ENCODE measurements at regions of chr2 and their contacts with region 1.

Region 1: DNA sequence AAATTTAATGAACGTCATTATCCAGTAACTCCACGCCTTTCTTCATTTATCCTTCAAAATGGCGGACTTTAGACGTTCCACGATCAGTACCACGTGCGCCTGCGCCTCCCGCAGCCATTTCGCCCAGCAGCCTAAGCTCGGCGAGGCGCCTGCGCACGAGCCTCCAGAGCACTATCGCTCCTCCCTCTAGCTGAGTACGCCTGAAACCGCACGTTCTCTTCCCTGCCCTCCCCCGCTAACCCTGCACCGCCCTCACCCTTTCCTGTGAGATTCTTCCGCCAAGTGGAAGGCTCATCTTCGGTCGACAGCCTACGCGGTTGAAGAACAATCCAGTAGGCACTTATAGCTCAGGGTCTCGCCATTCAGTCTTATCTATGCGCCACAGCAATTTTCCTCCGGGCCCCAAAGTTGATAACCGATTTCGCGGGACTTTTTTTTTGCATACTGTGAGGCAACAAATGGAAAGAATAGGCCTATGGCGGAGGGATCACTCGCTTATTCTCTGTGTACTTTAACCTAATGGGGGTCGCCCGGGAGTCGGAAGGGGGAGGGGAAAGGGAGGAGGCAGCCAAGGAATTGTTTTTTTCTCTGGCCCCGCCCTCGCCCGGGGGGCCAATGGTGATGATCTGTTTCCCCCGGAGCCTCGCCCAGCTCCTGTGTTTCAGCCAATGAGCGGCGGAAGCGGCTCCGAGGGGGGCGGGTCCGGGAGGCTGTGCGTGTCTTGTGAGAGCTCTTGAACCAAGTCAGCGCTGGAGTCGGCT is at the start of gene KDM3A:
- DNase-seq: peak; percentile 99 to 100 (median 100)
- ATAC-seq: peak; percentile 94 to 96 (median 95)
- H3K4me3 ChIP-seq: peak within 1 kb of the TSS; percentile 67 to 97 (median 76)
- H3K27ac ChIP-seq: peak within 1 kb of the TSS; percentile 91 to 99 (median 96)
- H3K4me1 ChIP-seq: peaks cover 0 to 35% (median 31%) of the 10 kb centered on the region in 12 donors
- H3K27me3 ChIP-seq: no peaks in the 10 kb centered on the region
- CTCF ChIP-seq: peak in 2 of 12 donors; percentile 15 to 25
- POLR2A ChIP-seq: peak in 1 of 2 donors; percentile 99
- total RNA-seq, gene KDM3A: 17.7 to 44.0 (median 35.4) TPM

Region 2: DNA sequence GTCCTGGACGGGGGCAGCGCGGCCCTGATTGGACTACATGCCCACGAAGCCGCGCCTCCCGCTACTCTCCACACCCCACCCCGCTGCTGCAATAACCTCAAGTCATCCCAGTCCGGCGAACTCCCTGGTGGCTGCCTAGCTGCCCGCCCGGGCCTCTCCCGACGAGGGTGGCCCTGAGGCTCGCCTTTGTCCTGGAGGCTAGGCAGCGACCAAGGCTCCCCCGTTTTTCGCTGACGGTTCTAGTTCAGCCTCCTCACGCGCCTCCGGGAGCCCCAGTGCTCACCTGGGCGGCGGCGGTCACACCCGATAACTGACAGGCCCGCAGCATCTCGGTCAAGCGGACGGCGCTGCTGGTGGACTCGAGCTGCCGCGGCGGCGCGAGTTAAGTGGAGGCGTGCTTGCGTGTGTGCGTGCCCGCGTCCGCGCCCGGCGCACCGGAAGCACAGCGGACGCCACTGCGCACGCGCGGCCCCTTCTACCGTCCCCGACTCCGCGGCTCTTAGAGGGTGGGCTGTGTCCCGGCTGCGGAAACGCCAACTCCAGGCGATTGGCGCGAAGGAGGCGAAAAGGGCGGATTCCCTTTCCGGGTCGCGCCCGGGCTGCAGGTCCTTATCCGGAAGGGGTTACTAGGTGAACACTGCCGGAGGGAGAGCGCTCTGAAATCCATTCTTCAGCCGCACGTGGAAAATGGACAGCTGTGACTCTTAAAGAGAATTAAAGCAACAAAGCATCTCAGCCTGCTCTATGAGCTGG is 245.6 kb before region 1 on chr2 and contains the start of gene IMMT:
- intact Hi-C with region 1: loop called in 4 of 10 experiments (anchors 5 to 10 kb)
- DNase-seq: peak; percentile 97 to 99 (median 98)
- ATAC-seq: peak; percentile 92 to 96 (median 94)
- H3K4me3 ChIP-seq: peak within 1 kb of the TSS; percentile 65 to 98 (median 85)
- H3K27ac ChIP-seq: peak within 1 kb of the TSS; percentile 94 to 100 (median 98)
- H3K4me1 ChIP-seq: peaks cover under 1 to 66% (median 49%) of the 10 kb centered on the region in 12 donors
- H3K27me3 ChIP-seq: no peaks in the 10 kb centered on the region
- CTCF ChIP-seq: no peak
- POLR2A ChIP-seq: peak in 1 of 2 donors; percentile 72
- total RNA-seq, gene IMMT: 180 to 315 (median 231) TPM

Region 3: DNA sequence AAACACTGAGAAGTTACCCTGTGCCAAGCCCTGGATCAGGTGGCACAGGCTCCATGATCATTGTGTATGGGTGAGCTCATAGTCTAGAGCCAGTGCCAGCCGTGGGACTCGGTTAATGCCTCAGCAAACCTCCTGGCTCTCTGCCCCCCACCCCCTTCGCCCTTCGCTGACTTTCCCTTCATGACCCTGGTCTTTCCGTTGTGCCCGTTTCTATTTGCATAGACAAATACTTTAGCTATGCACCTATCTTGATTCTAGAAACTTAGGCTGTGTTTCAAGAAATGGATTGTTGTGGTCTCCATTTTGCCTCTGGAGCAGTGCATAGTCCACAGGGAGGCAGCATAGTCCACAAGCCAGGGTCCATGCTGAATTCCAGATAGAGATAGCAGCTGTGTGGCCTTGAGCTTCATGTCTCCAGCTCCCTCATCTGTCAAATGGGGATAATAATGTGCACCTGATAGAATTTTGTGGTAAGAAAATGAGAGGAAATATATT is 44.5 kb before region 1 on chr2:
- intact Hi-C with region 1: loop called in 3 of 10 experiments (anchors 2 to 5 kb)
- DNase-seq: peak in 4 of 5 donors; percentile 27 to 66 (median 36)
- ATAC-seq: peak in 3 of 4 donors; percentile 49 to 59 (median 56)
- H3K4me3 ChIP-seq: no peak overlapping the region
- H3K27ac ChIP-seq: peak overlapping the region in 3 of 12 donors; percentile 4 to 84 (median 83)
- H3K4me1 ChIP-seq: peaks cover 0 to 32% (median 8%) of the 10 kb centered on the region in 12 donors
- H3K27me3 ChIP-seq: no peaks in the 10 kb centered on the region
- CTCF ChIP-seq: peak in 10 of 12 donors; percentile 17 to 54 (median 42)
- POLR2A ChIP-seq: no peak

Measured in heart left ventricle (tissue), 16 donors.